ENCODE measurements at regions of chr7 and their contacts with region 1.

Region 1: GRCh38 chr7:85041605-85042216 is 145.1 kb downstream of the SEMA3D start:
- DNase-seq: peak; percentile 68
- H3K4me3 Mint-ChIP-seq: no peak overlapping the region
- H3K27ac Mint-ChIP-seq: no peak overlapping the region
- H3K4me1 Mint-ChIP-seq: no peaks in the 10 kb centered on the region
- H3K27me3 Mint-ChIP-seq: peaks cover 3% of the 10 kb centered on the region

Region 2: DNA sequence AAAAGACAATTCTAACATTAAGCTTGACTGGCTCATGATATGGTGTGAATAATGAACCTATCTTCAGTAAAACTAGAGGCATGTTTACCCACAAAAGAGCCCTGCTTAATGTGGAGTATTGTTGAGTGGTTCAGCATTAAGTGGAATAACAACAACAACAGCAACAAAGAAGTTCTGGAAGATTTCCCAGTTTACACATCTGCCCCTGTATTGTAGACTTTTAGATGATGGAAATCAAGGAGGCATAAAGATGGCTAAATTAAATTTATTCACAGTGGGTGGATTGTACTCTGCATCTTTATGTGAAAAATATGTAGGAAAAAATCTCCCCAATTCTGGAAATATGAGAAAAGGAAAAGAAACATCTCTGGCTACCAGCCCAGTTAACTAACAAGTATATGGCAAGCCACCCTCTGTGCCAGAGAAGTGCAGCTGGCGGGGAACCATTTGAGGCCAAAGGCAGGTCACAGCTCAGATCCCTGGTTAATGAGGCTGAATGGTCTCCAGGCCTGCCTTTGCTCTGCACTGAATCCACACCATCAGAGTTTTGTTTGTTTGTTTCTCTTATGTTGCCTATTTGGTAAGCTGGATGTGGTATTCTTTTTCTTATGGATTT is 40.9 kb before region 1 on chr7:
- CTCF ChIA-PET with region 1: no interaction called
- intact Hi-C with region 1: no loop called
- DNase-seq: no peak
- H3K4me3 Mint-ChIP-seq: no peak overlapping the region
- H3K27ac Mint-ChIP-seq: no peak overlapping the region
- H3K4me1 Mint-ChIP-seq: no peaks in the 10 kb centered on the region
- H3K27me3 Mint-ChIP-seq: peaks cover 12% of the 10 kb centered on the region

Region 3: DNA sequence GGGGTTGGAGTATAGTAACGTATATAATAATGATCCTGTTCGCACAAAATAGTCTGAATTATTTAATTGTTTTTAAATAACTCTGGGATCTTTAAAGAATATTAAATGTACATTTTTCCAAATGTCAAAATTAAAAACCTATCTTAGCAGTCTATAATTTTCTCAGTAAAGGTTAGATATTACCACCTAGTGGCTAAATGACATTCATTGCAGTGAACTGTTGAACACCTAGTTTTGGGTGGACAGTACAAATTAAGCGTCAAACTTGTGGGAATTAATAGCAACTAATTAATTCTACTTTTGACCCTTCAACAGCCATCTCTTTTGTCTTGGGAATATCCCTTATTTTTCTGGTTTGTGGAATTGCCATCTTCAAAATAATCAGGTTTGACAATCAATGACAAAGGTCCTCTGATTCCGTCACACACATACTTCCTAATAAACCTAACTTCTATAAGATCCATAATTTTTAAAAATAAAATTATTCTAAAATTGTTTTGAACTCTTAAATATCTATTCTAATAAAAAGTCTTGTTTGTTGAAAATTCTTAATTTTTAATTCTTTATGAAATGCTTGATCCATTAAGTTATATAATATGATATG is 20.5 kb before region 1 on chr7:
- CTCF ChIA-PET with region 1: no interaction called
- intact Hi-C with region 1: no loop called
- DNase-seq: no peak
- H3K4me3 Mint-ChIP-seq: no peak overlapping the region
- H3K27ac Mint-ChIP-seq: no peak overlapping the region
- H3K4me1 Mint-ChIP-seq: no peaks in the 10 kb centered on the region
- H3K27me3 Mint-ChIP-seq: peaks cover 5% of the 10 kb centered on the region

Region 4: DNA sequence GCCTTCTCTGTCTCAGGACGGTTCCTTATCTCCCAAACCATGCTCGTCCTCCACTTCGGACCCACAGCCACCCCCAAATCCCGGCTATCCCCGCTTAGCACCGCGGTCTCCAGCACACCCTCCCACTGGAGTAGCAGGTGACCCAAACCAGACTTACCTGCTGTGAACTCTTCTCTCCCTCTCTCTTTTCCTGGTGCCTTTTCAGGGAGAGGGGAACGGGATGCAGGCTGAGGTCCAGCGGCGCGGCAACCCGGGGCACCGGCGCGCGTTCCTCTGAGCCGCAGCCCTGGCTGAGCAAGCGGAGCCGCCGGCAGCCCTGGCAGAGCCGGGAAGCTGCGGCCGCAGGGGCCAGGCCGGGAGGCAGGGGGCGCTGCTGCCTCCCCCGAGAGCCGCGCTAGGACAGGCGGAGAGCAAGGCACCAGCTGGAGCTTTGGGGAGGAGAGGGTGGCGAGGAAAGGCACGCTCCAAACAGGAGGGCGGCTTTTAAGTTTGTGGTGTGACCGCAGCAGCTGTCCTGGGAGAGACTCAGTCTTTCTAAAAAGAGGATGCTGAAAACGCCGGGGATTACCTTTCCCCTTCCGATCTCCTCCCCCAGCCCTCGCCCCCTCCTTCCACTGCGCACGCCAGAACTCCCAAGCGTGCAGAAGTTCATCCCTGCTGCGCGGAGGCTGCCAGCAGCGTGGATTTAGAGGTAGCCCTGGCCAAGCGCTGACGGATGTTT is 145.0 kb after region 1 on chr7 and contains the start of gene SEMA3D:
- CTCF ChIA-PET with region 1: no interaction called
- intact Hi-C with region 1: loop called (anchors 1 kb)
- DNase-seq: peak; percentile 34
- H3K4me3 Mint-ChIP-seq: peak within 1 kb of the TSS; percentile 12
- H3K27ac Mint-ChIP-seq: no peak within 1 kb of the TSS
- H3K4me1 Mint-ChIP-seq: peaks cover 4% of the 10 kb centered on the region
- H3K27me3 Mint-ChIP-seq: peaks cover 46% of the 10 kb centered on the region
- total RNA-seq, gene SEMA3D: not detected

Region 5: GRCh38 chr7:85464042-85464651 is 422.4 kb after region 1 on chr7:
- CTCF ChIA-PET with region 1: no interaction called
- intact Hi-C with region 1: loop called (anchors 2 kb)
- DNase-seq: no peak
- H3K4me3 Mint-ChIP-seq: no peak overlapping the region
- H3K27ac Mint-ChIP-seq: no peak overlapping the region
- H3K4me1 Mint-ChIP-seq: no peaks in the 10 kb centered on the region
- H3K27me3 Mint-ChIP-seq: peaks cover 3% of the 10 kb centered on the region

Region 6: DNA sequence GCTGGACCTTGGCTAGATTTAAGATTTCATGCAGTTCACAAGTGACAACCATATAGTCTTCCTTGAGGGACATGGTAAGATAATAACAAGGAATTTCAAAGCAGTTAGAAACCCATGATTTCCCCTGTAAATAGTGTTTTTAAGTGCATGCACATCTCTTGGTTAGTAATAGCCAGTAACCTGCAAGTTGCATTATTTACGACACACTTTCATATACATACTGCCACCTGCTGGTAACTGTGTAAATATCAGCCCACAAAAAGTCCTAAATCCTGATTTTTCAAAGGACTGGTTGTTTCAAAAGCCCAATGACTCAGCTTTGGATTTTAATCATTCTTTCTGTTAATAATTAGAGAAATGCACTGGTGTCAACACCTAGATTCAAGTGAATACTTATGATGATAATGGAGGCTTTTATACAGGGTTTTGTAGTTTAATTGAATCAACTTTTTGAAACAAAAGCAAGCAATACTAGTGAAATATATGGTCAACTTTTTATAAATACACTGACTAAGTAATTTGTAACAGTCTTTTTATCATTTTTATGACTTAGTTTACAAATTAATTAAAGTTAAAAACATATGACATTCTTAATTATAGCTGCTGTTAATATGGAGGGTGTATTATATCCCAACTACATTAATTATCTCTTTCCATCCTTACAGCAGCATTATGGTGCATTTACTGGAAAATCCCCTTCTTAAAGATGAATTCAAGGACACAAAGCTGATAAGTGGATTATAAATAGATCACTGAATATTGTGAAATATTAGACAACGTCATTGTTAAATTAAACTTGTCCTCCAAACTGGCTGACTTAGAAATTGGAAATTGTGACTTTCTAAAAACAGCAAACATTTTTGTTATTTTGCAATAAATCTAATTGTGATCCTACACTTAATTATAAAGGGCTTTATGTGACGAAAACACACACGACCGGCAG is 512.8 kb after region 1 on chr7:
- CTCF ChIA-PET with region 1: interaction called, 12 read pairs
- intact Hi-C with region 1: loop called (anchors 1 kb)
- DNase-seq: peak; percentile 8
- H3K4me3 Mint-ChIP-seq: no peak overlapping the region
- H3K27ac Mint-ChIP-seq: no peak overlapping the region
- H3K4me1 Mint-ChIP-seq: no peaks in the 10 kb centered on the region
- H3K27me3 Mint-ChIP-seq: no peaks in the 10 kb centered on the region

Region 7: GRCh38 chr7:85750454-85750949 is 708.8 kb after region 1 on chr7:
- CTCF ChIA-PET with region 1: no interaction called
- intact Hi-C with region 1: loop called (anchors 1 kb)
- DNase-seq: peak; percentile 50
- H3K4me3 Mint-ChIP-seq: no peak overlapping the region
- H3K27ac Mint-ChIP-seq: no peak overlapping the region
- H3K4me1 Mint-ChIP-seq: no peaks in the 10 kb centered on the region
- H3K27me3 Mint-ChIP-seq: no peaks in the 10 kb centered on the region

Measured in activated naive CD4-positive, alpha-beta T cell treated with anti-CD3 and anti-CD28 coated beads for 36 hours (primary cell).